ENCODE measurements at regions of chr11 and their contacts with region 1.

Region 1: DNA sequence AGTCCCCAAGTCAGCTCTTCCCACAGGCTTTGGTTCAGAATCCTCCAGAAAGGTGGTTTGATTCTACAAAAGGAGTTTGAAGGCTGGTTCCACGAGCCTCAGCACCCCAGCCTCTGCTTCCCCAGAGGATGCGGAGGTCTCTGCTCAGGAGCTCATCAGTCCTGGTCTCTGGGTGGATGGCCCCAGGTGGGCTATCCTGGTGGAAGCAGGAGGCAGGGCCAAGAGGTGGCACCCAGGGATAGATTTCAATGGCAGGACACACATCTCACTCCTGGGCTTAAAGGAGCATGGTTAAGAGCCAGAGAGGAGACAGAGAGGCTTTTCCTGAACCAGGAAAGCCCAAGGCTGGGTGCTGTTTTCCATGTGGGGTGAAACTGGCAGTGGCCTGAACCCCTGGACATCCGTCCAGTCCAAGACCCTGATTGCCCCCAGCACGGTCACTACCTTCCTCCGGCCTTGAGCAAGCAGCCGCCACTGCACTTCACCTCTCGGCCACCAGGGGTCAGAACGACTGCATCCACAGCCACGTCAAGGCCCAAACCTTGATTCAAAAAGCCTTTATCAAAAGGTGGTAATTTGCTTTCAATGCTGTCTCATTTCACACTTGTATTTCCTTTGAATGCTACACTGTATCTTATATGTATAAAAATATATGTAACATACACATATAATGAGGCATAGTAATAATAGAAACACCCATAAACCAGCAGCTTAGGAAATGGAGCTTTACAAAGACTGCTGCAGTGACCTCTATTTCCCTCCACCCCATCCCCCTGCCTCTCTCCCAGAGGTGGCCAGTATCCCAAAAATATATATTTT is 19.3 kb upstream of the FXYD2 start:
- DNase-seq: peak; percentile 77 to 90 (median 83)
- ATAC-seq: peak in 3 of 4 donors; percentile 76 to 83 (median 81)
- H3K4me3 ChIP-seq: no peak overlapping the region
- H3K27ac ChIP-seq: peak overlapping the region in 2 of 12 donors; percentile 16 to 20
- H3K4me1 ChIP-seq: peaks cover 0 to 23% (median 9%) of the 10 kb centered on the region in 12 donors
- H3K27me3 ChIP-seq: no peaks in the 10 kb centered on the region
- CTCF ChIP-seq: peak; percentile 97 to 100 (median 99)
- POLR2A ChIP-seq: no peak

Region 2: GRCh38 chr11:117876341-117877119 is 32.7 kb after region 1 on chr11 and contains the start of gene FXYD6:
- intact Hi-C with region 1: loop called in 1 of 10 experiments (anchors 5 kb)
- DNase-seq: peak; percentile 72 to 80 (median 79)
- ATAC-seq: peak; percentile 48 to 79 (median 72)
- H3K4me3 ChIP-seq: peak within 1 kb of the TSS; percentile 36 to 96 (median 77)
- H3K27ac ChIP-seq: peak within 1 kb of the TSS; percentile 49 to 96 (median 90)
- H3K4me1 ChIP-seq: peaks cover 0 to 61% (median 43%) of the 10 kb centered on the region in 12 donors
- H3K27me3 ChIP-seq: peaks cover 0 to 23% (median 0%) of the 10 kb centered on the region in 9 donors
- CTCF ChIP-seq: no peak
- POLR2A ChIP-seq: no peak
- total RNA-seq, gene FXYD6: 24.6 to 51.2 (median 35.0) TPM

Region 3: GRCh38 chr11:117900121-117900648 is 56.3 kb after region 1 on chr11:
- intact Hi-C with region 1: loop called (anchors 1 to 5 kb)
- DNase-seq: peak in 1 of 5 donors; percentile 32
- ATAC-seq: peak; percentile 27 to 51 (median 40)
- H3K4me3 ChIP-seq: no peak overlapping the region
- H3K27ac ChIP-seq: peak overlapping the region in 1 of 12 donors; percentile 37
- H3K4me1 ChIP-seq: peaks cover 0 to 25% (median 0%) of the 10 kb centered on the region in 12 donors
- H3K27me3 ChIP-seq: no peaks in the 10 kb centered on the region
- CTCF ChIP-seq: no peak
- POLR2A ChIP-seq: no peak

Region 4: DNA sequence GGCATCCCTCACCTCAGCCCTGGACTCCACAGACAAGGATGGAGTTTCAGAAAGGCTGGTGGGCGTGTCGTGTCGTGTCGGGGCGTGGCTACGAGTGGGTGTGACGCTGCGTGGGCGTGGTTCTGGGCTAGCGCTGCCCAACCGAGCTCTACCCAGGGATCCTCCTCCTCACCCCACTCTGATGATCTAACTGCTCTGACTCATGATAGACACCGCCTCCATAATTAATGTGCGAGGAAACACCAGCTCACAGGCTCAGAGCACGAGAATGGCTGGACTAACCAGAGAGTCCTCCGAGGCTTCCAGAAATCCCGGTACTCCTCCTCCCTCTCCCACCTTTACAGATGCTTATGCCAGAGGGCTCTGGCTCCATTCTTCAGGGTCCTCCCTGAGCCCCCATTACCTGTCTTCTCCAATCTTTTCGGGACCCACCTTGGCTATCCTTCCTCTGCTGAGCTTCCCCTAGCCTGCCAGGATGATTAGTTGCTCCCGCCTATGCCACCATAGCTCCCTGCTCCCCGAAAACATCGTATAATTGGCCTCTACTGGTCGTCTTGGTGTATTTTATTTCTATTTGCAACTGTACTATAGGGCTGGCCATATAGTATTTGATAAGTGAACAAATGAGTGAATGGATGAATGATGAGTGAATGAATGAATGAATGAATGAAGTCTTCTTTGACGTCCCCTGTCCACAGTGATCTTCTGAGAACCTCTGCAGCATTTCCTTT is 63.5 kb after region 1 on chr11:
- intact Hi-C with region 1: loop called (anchors 1 to 5 kb)
- DNase-seq: peak; percentile 82 to 91 (median 83)
- ATAC-seq: peak; percentile 74 to 97 (median 95)
- H3K4me3 ChIP-seq: peak overlapping the region in 1 of 12 donors; percentile 16
- H3K27ac ChIP-seq: no peak overlapping the region
- H3K4me1 ChIP-seq: peaks cover 0 to 8% (median 0%) of the 10 kb centered on the region in 12 donors
- H3K27me3 ChIP-seq: peaks cover 0 to 2% (median 0%) of the 10 kb centered on the region in 9 donors
- CTCF ChIP-seq: no peak
- POLR2A ChIP-seq: no peak

Region 5: GRCh38 chr11:118214210-118214914 is 370.5 kb after region 1 on chr11:
- intact Hi-C with region 1: no loop called
- DNase-seq: peak in 3 of 5 donors; percentile 36 to 64 (median 49)
- ATAC-seq: peak in 3 of 4 donors; percentile 36 to 79 (median 53)
- H3K4me3 ChIP-seq: peak overlapping the region in 1 of 12 donors; percentile 25
- H3K27ac ChIP-seq: peak overlapping the region in 3 of 12 donors; percentile 6 to 85 (median 48)
- H3K4me1 ChIP-seq: peaks cover 0 to 87% (median 14%) of the 10 kb centered on the region in 12 donors
- H3K27me3 ChIP-seq: no peaks in the 10 kb centered on the region
- CTCF ChIP-seq: no peak
- POLR2A ChIP-seq: no peak

Measured in heart left ventricle (tissue), 16 donors.